Ovary (tissue), 10 donors: ENCODE measurements at regions of chr11 and their contacts with region 1.

Region 1: DNA sequence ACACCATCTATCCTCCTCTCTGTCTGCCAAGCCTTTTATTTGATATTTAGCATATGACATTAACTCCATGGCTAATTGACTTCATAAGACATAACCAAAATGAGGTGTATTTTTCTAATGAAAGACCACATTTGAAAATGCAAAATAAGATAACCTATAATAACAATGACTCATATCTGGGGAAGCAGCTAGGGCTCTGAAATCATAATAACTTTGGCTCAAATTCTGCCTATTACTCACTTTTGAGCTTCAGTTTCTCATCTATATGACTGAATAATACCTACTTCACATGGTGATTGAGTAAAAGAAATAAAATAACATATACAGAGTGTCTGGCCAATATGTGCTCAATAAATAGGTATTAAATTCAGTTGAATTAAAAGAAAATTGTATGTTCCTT is 1419.8 kb upstream of the TENM4 start:
- DNase-seq: no peak
- H3K4me3 ChIP-seq: no peak overlapping the region
- H3K27ac ChIP-seq: no peak overlapping the region
- H3K4me1 ChIP-seq: no peaks in the 10 kb centered on the region
- H3K27me3 ChIP-seq: no peaks in the 10 kb centered on the region
- CTCF ChIP-seq: no peak
- EP300 ChIP-seq: no peak
- POLR2A ChIP-seq: no peak

Region 2: DNA sequence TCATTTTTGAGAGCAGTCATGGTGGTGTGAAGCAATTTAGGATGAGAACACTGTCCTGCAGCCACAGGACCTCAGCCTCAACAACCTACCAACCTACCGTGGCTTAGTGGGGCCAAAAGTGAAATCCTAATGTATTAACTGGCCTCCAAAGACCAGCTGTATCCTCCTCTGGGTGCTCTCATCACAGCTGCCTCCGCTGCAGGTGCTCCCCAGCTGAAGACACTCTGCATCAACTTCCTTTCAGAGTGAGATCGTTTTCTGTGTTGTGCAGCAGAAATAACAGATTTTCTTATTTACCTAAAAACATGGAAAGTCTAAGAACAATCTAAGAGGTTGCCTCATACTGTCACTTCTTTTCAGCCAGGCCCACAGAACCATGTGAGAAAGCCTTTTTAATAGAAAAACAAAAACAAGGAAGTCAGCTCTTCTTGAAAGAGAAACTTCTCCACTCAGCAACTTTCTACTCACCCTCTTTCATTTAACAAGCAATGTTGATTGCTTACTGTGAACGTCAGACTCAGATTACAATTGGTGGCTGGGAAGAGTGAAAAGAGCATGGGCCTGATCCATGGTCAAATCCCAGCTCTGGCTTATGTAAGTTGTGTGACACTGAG is 1555.9 kb before region 1 on chr11:
- intact Hi-C with region 1: loop called in 1 of 4 experiments (anchors 5 kb)
- DNase-seq: no peak
- H3K4me3 ChIP-seq: no peak overlapping the region
- H3K27ac ChIP-seq: peak overlapping the region in 1 of 2 donors; percentile 53
- H3K4me1 ChIP-seq: peaks cover 16% of the 10 kb centered on the region
- H3K27me3 ChIP-seq: no peaks in the 10 kb centered on the region
- CTCF ChIP-seq: no peak
- EP300 ChIP-seq: no peak
- POLR2A ChIP-seq: no peak